ENCODE measurements at regions of chrX and their contacts with region 1.

Region 1: GRCh38 chrX:11770320-11770719 is 12.3 kb downstream of the MSL3 start:
- DNase-seq: peak; percentile 63
- ATAC-seq: peak; percentile 60
- H3K4me3 Mint-ChIP-seq: no peak overlapping the region
- H3K27ac Mint-ChIP-seq: peak overlapping the region; percentile 67
- H3K4me1 Mint-ChIP-seq: peaks cover 27% of the 10 kb centered on the region
- H3K27me3 Mint-ChIP-seq: no peaks in the 10 kb centered on the region

Region 2: DNA sequence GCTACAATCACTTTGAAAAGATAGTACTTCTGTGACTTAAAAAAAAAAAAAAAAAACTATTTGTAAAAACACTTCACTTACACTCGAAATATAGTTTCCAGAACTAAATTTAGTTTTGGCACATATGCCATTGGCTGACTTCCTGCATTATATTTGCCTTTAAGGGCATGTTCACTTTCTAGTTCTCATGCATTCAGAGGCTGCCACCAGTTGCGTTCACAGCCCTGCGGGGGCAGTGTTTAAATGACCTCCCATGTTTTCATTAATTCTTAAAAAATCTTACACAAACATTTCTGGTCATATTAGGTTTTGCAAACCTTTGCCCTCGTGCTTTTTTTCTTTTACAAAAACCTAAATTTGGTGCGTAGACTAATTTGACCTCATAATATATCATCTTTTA is 92.2 kb before region 1 on chrX:
- CTCF ChIA-PET with region 1: no interaction called
- POLR2A ChIA-PET with region 1: no interaction called
- DNase-seq: no peak
- ATAC-seq: no peak
- H3K4me3 Mint-ChIP-seq: no peak overlapping the region
- H3K27ac Mint-ChIP-seq: no peak overlapping the region
- H3K4me1 Mint-ChIP-seq: no peaks in the 10 kb centered on the region
- H3K27me3 Mint-ChIP-seq: no peaks in the 10 kb centered on the region

Region 3: GRCh38 chrX:11758400-11759171 is 11.7 kb before region 1 on chrX:
- CTCF ChIA-PET with region 1: interaction called, 47 read pairs
- POLR2A ChIA-PET with region 1: interaction called, 27 read pairs
- DNase-seq: peak; percentile 90
- ATAC-seq: peak; percentile 62
- H3K4me3 Mint-ChIP-seq: peak overlapping the region; percentile 86
- H3K27ac Mint-ChIP-seq: peak overlapping the region; percentile 93
- H3K4me1 Mint-ChIP-seq: peaks cover 22% of the 10 kb centered on the region
- H3K27me3 Mint-ChIP-seq: peaks cover 13% of the 10 kb centered on the region

Region 4: GRCh38 chrX:11787564-11787963 is 17.2 kb after region 1 on chrX:
- CTCF ChIA-PET with region 1: interaction called, 22 read pairs
- POLR2A ChIA-PET with region 1: no interaction called
- DNase-seq: peak; percentile 79
- ATAC-seq: peak; percentile 80
- H3K4me3 Mint-ChIP-seq: peak overlapping the region; percentile 56
- H3K27ac Mint-ChIP-seq: no peak overlapping the region
- H3K4me1 Mint-ChIP-seq: peaks cover 32% of the 10 kb centered on the region
- H3K27me3 Mint-ChIP-seq: no peaks in the 10 kb centered on the region

Region 5: GRCh38 chrX:11886745-11887144 is 116.4 kb after region 1 on chrX:
- CTCF ChIA-PET with region 1: no interaction called
- POLR2A ChIA-PET with region 1: no interaction called
- DNase-seq: no peak
- ATAC-seq: no peak
- H3K4me3 Mint-ChIP-seq: no peak overlapping the region
- H3K27ac Mint-ChIP-seq: no peak overlapping the region
- H3K4me1 Mint-ChIP-seq: no peaks in the 10 kb centered on the region
- H3K27me3 Mint-ChIP-seq: no peaks in the 10 kb centered on the region